ENCODE measurements at regions of chrX and their contacts with region 1.

Region 1: GRCh38 chrX:151151665-151152267 is 24.6 kb upstream of the GPR50 start:
- DNase-seq: peak in 6 of 9 donors; percentile 19 to 47 (median 38)
- ATAC-seq: peak; percentile 37
- H3K4me3 ChIP-seq: no peak overlapping the region
- H3K4me3 Mint-ChIP-seq: no peak overlapping the region
- H3K27ac ChIP-seq: no peak overlapping the region
- H3K27ac Mint-ChIP-seq: no peak overlapping the region
- H3K4me1 ChIP-seq: no peaks in the 10 kb centered on the region
- H3K4me1 Mint-ChIP-seq: no peaks in the 10 kb centered on the region
- H3K27me3 ChIP-seq: no peaks in the 10 kb centered on the region
- H3K27me3 Mint-ChIP-seq: peaks cover 14 to 26% (median 17%) of the 10 kb centered on the region in 5 donors

Region 2: GRCh38 chrX:151359931-151360871 is 208.4 kb after region 1 on chrX:
- CTCF ChIA-PET with region 1: no interaction called
- POLR2A ChIA-PET with region 1: no interaction called
- intact Hi-C with region 1: loop called (anchors 5 kb)
- DNase-seq: peak in 8 of 9 donors; percentile 7 to 36 (median 16)
- ATAC-seq: peak; percentile 67
- H3K4me3 ChIP-seq: peak overlapping the region; percentile 26
- H3K4me3 Mint-ChIP-seq: peak overlapping the region in 9 of 10 donors; percentile 21 to 76 (median 62)
- H3K27ac ChIP-seq: no peak overlapping the region
- H3K27ac Mint-ChIP-seq: no peak overlapping the region
- H3K4me1 ChIP-seq: peaks cover 0 to 2% of the 10 kb centered on the region in 2 donors
- H3K4me1 Mint-ChIP-seq: no peaks in the 10 kb centered on the region
- H3K27me3 ChIP-seq: peaks cover 0 to 5% of the 10 kb centered on the region in 2 donors
- H3K27me3 Mint-ChIP-seq: peaks cover 12 to 27% (median 14%) of the 10 kb centered on the region in 5 donors

Region 3: DNA sequence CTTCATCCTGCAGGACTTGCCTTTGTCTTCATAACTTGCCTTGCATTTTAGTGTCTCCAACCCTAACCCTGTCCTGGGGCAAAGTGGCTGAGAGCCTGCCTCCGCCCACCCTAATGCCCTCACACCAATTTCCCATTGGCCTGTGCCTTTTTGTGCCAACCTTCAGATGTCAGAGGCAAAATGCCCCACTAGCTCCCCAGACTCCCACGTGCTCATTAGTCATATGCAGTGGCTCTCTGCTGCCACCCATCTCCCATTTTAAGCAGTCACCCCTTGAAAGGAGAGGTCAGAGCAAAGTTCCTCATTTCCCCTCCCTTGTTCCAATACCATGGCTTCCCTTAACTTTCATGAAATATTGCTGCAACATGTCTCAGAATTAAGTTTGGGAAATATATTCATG is 336.9 kb after region 1 on chrX:
- CTCF ChIA-PET with region 1: no interaction called
- POLR2A ChIA-PET with region 1: no interaction called
- intact Hi-C with region 1: loop called in 1 of 2 experiments (anchors 5 kb)
- DNase-seq: peak in 2 of 9 donors; percentile 1 to 8
- ATAC-seq: no peak
- H3K4me3 ChIP-seq: no peak overlapping the region
- H3K4me3 Mint-ChIP-seq: no peak overlapping the region
- H3K27ac ChIP-seq: no peak overlapping the region
- H3K27ac Mint-ChIP-seq: no peak overlapping the region
- H3K4me1 ChIP-seq: no peaks in the 10 kb centered on the region
- H3K4me1 Mint-ChIP-seq: peaks cover 0 to 3% (median 0%) of the 10 kb centered on the region in 7 donors
- H3K27me3 ChIP-seq: no peaks in the 10 kb centered on the region
- H3K27me3 Mint-ChIP-seq: peaks cover 0 to 3% (median 0%) of the 10 kb centered on the region in 5 donors

Region 4: GRCh38 chrX:151680805-151681204 is 529.0 kb after region 1 on chrX:
- CTCF ChIA-PET with region 1: no interaction called
- POLR2A ChIA-PET with region 1: no interaction called
- intact Hi-C with region 1: loop called in 1 of 2 experiments (anchors 1 kb)
- DNase-seq: peak in 8 of 9 donors; percentile 9 to 47 (median 31)
- ATAC-seq: peak; percentile 32
- H3K4me3 ChIP-seq: no peak overlapping the region
- H3K4me3 Mint-ChIP-seq: no peak overlapping the region
- H3K27ac ChIP-seq: no peak overlapping the region
- H3K27ac Mint-ChIP-seq: no peak overlapping the region
- H3K4me1 ChIP-seq: no peaks in the 10 kb centered on the region
- H3K4me1 Mint-ChIP-seq: peaks cover 0 to 7% (median 0%) of the 10 kb centered on the region in 7 donors
- H3K27me3 ChIP-seq: no peaks in the 10 kb centered on the region
- H3K27me3 Mint-ChIP-seq: peaks cover 4 to 17% (median 13%) of the 10 kb centered on the region in 5 donors

Region 5: DNA sequence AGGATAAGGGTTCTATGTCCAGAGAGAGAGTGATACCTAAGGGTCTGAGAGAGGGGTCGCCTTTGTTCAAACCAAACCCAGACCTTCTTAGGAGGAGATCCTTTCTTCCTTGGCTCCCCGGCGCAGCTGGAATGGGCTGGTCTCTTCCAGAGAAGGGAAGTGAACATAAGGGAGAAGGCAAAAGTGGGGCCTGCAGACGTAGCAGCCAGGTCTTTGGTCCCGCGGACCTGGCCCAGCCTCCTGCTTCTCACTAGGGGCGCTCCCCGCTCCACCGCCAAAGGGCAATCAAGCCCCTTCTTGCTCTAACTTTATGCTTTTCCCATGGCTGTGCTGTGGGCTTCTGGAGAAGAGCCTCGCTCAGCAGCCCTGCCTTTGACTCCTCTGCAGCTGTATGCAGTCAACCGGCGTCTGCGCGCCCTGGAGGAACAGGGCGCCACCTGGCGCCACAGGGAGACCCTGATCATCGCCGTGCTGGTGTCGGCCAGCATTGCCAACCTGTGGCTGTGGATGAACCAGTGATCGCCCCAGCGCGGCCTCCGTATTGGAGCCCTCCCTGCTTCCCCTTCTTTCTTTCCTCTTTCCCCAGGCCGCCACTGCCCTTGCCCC is 570.6 kb after region 1 on chrX:
- CTCF ChIA-PET with region 1: no interaction called
- POLR2A ChIA-PET with region 1: no interaction called
- intact Hi-C with region 1: loop called in 1 of 2 experiments (anchors 2 kb)
- DNase-seq: no peak
- ATAC-seq: no peak
- H3K4me3 ChIP-seq: no peak overlapping the region
- H3K4me3 Mint-ChIP-seq: no peak overlapping the region
- H3K27ac ChIP-seq: no peak overlapping the region
- H3K27ac Mint-ChIP-seq: peak overlapping the region in 1 of 9 donors; percentile 36
- H3K4me1 ChIP-seq: no peaks in the 10 kb centered on the region
- H3K4me1 Mint-ChIP-seq: no peaks in the 10 kb centered on the region
- H3K27me3 ChIP-seq: no peaks in the 10 kb centered on the region
- H3K27me3 Mint-ChIP-seq: no peaks in the 10 kb centered on the region